PC-9 (cell line): ENCODE measurements at regions of chr17 and their contacts with region 1.

Region 1: GRCh38 chr17:36629252-36629847 is 28.0 kb downstream of the MRM1 start:
- DNase-seq: peak; percentile 59 to 79
- H3K4me3 ChIP-seq: no peak overlapping the region
- H3K27ac ChIP-seq: no peak overlapping the region
- H3K4me1 ChIP-seq: no peaks in the 10 kb centered on the region
- H3K27me3 ChIP-seq: no peaks in the 10 kb centered on the region
- CTCF ChIP-seq: peak; percentile 99

Region 2: DNA sequence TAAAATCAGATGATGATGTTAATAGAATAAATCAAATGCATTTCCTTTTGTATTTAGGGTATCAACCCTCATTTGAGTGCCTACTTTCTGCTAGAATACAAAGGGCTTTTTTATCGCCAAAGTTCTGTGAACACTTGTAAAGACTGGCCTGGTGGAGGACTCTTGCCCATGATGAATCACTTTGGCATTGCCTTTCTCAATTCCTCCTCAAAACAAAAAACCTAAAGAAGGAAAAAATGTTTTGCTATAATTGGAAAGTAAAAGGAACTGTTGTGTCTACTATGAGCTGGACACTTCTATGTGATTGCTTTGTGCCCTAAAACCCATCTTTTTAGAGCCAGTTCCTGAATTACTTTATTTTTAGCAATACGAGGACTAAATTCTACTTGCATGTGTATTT is 50.7 kb before region 1 on chr17:
- CTCF ChIA-PET with region 1: no interaction called
- POLR2A ChIA-PET with region 1: no interaction called
- intact Hi-C with region 1: no loop called
- DNase-seq: no peak
- H3K4me3 ChIP-seq: no peak overlapping the region
- H3K27ac ChIP-seq: no peak overlapping the region
- H3K4me1 ChIP-seq: no peaks in the 10 kb centered on the region
- H3K27me3 ChIP-seq: no peaks in the 10 kb centered on the region
- CTCF ChIP-seq: no peak

Region 3: DNA sequence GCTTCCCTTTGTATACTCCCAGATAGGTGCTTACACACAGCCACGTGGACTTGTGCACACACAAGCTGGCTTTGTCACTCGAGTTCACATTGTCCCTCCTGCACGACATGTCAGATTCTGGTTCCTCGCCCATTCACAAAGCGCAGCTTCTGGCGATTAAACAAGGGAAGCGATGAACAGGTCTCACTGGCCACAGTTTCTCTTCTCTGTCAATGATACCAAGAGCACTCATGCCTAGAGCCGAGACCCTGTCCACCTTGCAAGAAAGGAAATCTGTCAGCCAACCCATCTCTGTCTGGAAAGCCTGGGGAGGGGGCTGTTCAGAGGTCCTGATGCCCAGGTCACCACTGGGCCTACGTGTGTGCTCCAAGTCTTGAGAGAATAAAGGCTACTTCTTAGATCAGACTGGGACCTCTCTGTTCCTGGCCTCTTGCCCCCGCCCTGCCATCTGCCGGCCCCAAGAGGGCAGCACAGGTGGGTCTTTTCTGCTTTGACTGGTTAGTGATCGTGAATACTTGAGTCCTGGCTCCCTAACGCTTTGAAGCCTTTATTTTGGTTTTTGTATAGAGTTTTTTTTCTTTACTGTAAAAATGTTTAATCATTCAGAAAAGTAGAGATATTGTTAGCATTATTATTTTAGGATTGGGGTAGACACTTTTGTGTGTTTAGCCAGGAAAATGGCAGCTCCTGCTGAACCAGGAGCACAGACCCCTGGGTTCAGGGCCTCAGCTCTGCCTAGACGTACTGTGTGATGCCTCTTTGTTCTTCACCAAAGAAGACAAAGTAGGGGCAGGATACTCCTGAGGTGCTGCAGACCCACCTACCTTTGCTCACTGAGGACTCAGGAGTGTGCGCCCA is 76.8 kb after region 1 on chr17:
- CTCF ChIA-PET with region 1: interaction called, 3 read pairs
- POLR2A ChIA-PET with region 1: no interaction called
- intact Hi-C with region 1: loop called (anchors 5 kb)
- DNase-seq: peak in 1 of 2 experiments; percentile 44
- H3K4me3 ChIP-seq: no peak overlapping the region
- H3K27ac ChIP-seq: no peak overlapping the region
- H3K4me1 ChIP-seq: 0 out of 2 replicates have a peak, but pooled peaks cover 5% of the 10 kb centered on the region
- H3K27me3 ChIP-seq: peaks cover 11% of the 10 kb centered on the region
- CTCF ChIP-seq: peak; percentile 79

Region 4: DNA sequence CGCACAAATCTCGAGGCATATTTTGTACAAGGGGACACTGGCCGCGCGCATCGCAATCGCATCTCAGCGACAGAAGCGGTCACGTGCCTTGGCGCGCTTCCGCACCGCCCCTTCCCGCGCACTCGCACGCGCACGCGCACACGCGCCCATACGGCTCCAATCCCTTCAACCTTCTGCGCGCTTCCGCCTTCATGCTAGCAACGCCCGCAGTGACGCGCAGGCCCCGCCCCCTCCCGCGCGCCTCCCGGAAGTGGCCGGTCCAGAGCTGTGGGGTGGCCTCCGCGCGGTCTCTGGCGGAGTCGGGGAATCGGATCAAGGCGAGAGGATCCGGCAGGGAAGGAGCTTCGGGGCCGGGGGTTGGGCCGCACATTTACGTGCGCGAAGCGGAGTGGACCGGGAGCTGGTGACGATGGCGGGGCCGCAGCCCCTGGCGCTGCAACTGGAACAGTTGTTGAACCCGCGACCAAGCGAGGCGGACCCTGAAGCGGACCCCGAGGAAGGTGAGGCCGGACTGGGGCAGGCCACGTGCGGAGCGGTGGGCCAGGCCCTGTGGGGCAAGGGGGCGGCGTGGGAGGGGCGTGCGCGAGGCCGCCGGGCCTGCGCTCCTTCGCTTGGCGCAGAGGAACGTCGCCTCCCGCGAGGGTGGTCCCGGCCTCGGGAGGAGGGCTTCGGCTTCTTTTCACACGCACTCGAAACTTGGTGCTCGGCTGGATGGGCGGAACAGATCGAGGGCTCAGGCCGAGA is 319.5 kb after region 1 on chr17 and contains the start of gene AATF:
- CTCF ChIA-PET with region 1: no interaction called
- POLR2A ChIA-PET with region 1: no interaction called
- intact Hi-C with region 1: loop called (anchors 5 kb)
- DNase-seq: peak; percentile 86 to 96
- H3K4me3 ChIP-seq: peak within 1 kb of the TSS; percentile 88
- H3K27ac ChIP-seq: peak within 1 kb of the TSS; percentile 82
- H3K4me1 ChIP-seq: peaks cover 33% of the 10 kb centered on the region; the same call in 1 of the 2 replicates
- H3K27me3 ChIP-seq: no peaks in the 10 kb centered on the region
- CTCF ChIP-seq: no peak
- total RNA-seq, gene AATF: 71.4 and 79.6 TPM in 2 replicates

Region 5: DNA sequence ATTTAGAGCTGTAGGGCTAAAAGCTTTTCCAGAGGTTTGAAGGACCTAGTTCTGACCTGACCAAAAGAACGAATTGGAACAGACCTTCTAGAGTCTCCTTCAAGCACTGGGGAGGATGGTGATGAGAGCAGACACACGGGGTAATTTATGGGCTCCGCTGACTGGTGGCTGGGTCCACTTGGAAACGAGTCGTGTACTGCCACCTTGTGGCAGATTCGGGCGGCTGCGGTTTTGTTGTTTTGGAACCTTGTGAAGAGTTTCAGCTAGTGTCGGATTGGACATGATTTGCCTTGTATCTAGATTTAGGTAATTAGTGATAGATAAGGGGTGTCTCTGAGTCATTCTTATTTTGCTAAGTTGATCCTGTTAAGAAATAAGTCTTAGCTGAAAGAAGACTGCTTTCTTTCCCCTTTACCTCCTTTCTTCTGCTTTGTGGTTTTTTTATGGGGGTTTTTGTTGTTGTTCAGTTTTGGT is 418.3 kb after region 1 on chr17:
- CTCF ChIA-PET with region 1: interaction called, 14 read pairs
- POLR2A ChIA-PET with region 1: no interaction called
- intact Hi-C with region 1: loop called (anchors 1 kb)
- DNase-seq: peak; percentile 56 to 57
- H3K4me3 ChIP-seq: no peak overlapping the region
- H3K27ac ChIP-seq: no peak overlapping the region
- H3K4me1 ChIP-seq: no peaks in the 10 kb centered on the region
- H3K27me3 ChIP-seq: no peaks in the 10 kb centered on the region
- CTCF ChIP-seq: peak; percentile 89

Region 6: GRCh38 chr17:37239690-37240334 is 610.5 kb after region 1 on chr17:
- CTCF ChIA-PET with region 1: no interaction called
- POLR2A ChIA-PET with region 1: no interaction called
- intact Hi-C with region 1: loop called (anchors 5 kb)
- DNase-seq: no peak
- H3K4me3 ChIP-seq: no peak overlapping the region
- H3K27ac ChIP-seq: no peak overlapping the region
- H3K4me1 ChIP-seq: no peaks in the 10 kb centered on the region
- H3K27me3 ChIP-seq: no peaks in the 10 kb centered on the region
- CTCF ChIP-seq: peak; percentile 76

Region 7: GRCh38 chr17:37373530-37374159 is 744.3 kb after region 1 on chr17:
- CTCF ChIA-PET with region 1: no interaction called
- POLR2A ChIA-PET with region 1: no interaction called
- intact Hi-C with region 1: loop called (anchors 5 kb)
- DNase-seq: peak; percentile 73
- H3K4me3 ChIP-seq: no peak overlapping the region
- H3K27ac ChIP-seq: no peak overlapping the region
- H3K4me1 ChIP-seq: no peaks in the 10 kb centered on the region
- H3K27me3 ChIP-seq: no peaks in the 10 kb centered on the region
- CTCF ChIP-seq: peak; percentile 96